ENCODE measurements at regions of chr2 and their contacts with region 1.

Region 1: GRCh38 chr2:130181325-130181879 is at the start of gene SMPD4:
- DNase-seq: peak; percentile 99
- H3K4me3 ChIP-seq: peak within 1 kb of the TSS; percentile 79 to 100 (median 98)
- H3K27ac ChIP-seq: peak within 1 kb of the TSS; percentile 90 to 97 (median 95)
- H3K4me1 ChIP-seq: peaks cover 15 to 52% (median 31%) of the 10 kb centered on the region in 6 donors
- H3K27me3 ChIP-seq: no peaks in the 10 kb centered on the region
- CTCF ChIP-seq: no peak
- POLR2A ChIP-seq: no peak
- total RNA-seq, gene SMPD4: 32.7 to 44.9 (median 40.7) TPM

Region 2: GRCh38 chr2:129780316-129781270 is 400.8 kb before region 1 on chr2:
- intact Hi-C with region 1: no loop called
- DNase-seq: no peak
- H3K4me3 ChIP-seq: no peak overlapping the region
- H3K27ac ChIP-seq: no peak overlapping the region
- H3K4me1 ChIP-seq: no peaks in the 10 kb centered on the region
- H3K27me3 ChIP-seq: peaks cover 0 to 31% (median 0%) of the 10 kb centered on the region in 7 donors
- CTCF ChIP-seq: no peak
- POLR2A ChIP-seq: no peak

Region 3: DNA sequence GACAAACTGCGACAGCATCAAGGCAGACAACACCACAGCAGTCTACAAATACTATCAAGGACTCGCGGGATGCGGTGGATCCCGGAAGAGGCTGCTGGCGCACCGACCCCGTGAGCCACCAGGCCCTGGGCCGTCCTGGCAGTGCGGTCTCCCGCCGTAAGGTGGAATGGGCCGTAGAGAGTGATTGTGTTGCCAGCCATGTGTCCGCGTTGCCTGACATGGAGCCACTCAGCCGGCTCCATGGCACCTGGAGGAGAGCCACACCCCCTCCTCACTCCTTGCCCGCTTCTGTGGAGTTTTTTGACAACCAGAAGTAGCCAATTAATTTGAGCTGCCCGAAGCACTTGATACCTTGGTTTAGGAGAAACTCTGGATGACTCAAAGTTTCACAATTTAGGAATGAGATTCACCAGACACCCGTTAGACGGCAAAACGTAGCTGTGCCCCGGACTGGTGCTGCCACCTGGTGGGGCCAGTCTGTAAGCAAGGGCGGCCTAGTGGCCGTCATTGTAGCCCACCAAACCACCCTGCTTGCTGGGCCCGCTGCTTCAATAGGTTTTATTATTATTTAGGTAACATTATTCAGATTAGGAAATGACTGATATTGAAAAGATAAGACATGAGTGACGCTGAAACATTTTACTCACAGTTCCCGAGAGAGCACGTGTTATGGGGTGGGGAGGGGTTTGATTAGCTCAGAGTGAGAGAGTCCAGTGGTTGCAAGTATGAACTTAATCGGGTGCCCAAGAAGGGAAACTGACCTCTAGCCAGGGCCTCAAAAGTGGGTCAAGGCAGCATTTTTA is 151.1 kb after region 1 on chr2:
- intact Hi-C with region 1: loop called (anchors 10 kb)
- DNase-seq: peak; percentile 91
- H3K4me3 ChIP-seq: peak overlapping the region in 1 of 8 donors; percentile 42
- H3K27ac ChIP-seq: no peak overlapping the region
- H3K4me1 ChIP-seq: peaks cover 0 to 16% (median 8%) of the 10 kb centered on the region in 6 donors
- H3K27me3 ChIP-seq: peaks cover 0 to 40% (median 4%) of the 10 kb centered on the region in 7 donors
- CTCF ChIP-seq: peak; percentile 62 to 93 (median 88)
- POLR2A ChIP-seq: no peak

Measured in spleen (tissue), 13 donors.